BJ (cell line): ENCODE measurements at regions of chr7 and their contacts with region 1.

Region 1: GRCh38 chr7:101717628-101718357 is 88.7 kb upstream of the MYL10 start:
- DNase-seq: peak; percentile 55
- H3K4me3 ChIP-seq: no peak overlapping the region
- H3K27me3 ChIP-seq: 0 out of 2 replicates have a peak, but pooled peaks cover 1% of the 10 kb centered on the region
- CTCF ChIP-seq: peak; percentile 26; the same call in 1 of the 2 replicates

Region 2: GRCh38 chr7:101630591-101630990 is 87.2 kb before region 1 on chr7:
- CTCF ChIA-PET with region 1: no interaction called
- POLR2A ChIA-PET with region 1: interaction called, 11 read pairs
- DNase-seq: peak; percentile 23
- H3K4me3 ChIP-seq: no peak overlapping the region
- H3K27me3 ChIP-seq: no peaks in the 10 kb centered on the region
- CTCF ChIP-seq: no peak

Region 3: GRCh38 chr7:101749891-101750290 is 32.1 kb after region 1 on chr7:
- CTCF ChIA-PET with region 1: no interaction called
- POLR2A ChIA-PET with region 1: no interaction called
- DNase-seq: no peak
- H3K4me3 ChIP-seq: no peak overlapping the region
- H3K27me3 ChIP-seq: peaks cover 11% of the 10 kb centered on the region
- CTCF ChIP-seq: no peak